ENCODE measurements at regions of chr3 and their contacts with region 1.

Region 1: DNA sequence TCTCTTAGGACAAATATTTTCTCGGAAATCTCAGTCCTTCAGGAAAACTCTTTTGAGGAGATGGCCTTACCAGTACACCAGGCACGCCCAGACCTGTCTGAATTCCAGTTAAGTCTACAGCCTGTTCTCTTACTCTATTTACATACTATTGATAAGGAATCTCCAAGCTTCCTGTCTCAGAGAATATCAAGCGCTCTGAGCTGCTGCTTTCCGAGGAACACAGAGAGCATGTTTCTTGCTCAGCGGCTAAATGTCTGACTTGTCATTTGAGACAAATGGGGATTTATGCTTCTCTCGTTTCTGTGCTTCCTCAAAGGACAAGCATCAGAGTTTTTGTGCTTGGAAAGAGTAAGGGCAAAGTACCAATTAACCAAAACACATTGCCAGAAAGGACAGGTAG is 112.4 kb upstream of the CCDC54 start:
- DNase-seq: no peak
- ATAC-seq: peak in 1 of 4 donors; percentile 18
- H3K4me3 ChIP-seq: peak overlapping the region in 1 of 12 donors; percentile 8
- H3K27ac ChIP-seq: peak overlapping the region in 5 of 12 donors; percentile 6 to 63 (median 17)
- H3K4me1 ChIP-seq: peaks cover 0 to 22% (median 1%) of the 10 kb centered on the region in 12 donors
- H3K27me3 ChIP-seq: no peaks in the 10 kb centered on the region
- CTCF ChIP-seq: no peak
- POLR2A ChIP-seq: no peak

Region 2: GRCh38 chr3:106333911-106334618 is 930.8 kb before region 1 on chr3:
- intact Hi-C with region 1: no loop called
- DNase-seq: no peak
- ATAC-seq: no peak
- H3K4me3 ChIP-seq: no peak overlapping the region
- H3K27ac ChIP-seq: no peak overlapping the region
- H3K4me1 ChIP-seq: peaks cover 0 to 3% (median 0%) of the 10 kb centered on the region in 12 donors
- H3K27me3 ChIP-seq: no peaks in the 10 kb centered on the region
- CTCF ChIP-seq: no peak
- POLR2A ChIP-seq: no peak

Region 3: DNA sequence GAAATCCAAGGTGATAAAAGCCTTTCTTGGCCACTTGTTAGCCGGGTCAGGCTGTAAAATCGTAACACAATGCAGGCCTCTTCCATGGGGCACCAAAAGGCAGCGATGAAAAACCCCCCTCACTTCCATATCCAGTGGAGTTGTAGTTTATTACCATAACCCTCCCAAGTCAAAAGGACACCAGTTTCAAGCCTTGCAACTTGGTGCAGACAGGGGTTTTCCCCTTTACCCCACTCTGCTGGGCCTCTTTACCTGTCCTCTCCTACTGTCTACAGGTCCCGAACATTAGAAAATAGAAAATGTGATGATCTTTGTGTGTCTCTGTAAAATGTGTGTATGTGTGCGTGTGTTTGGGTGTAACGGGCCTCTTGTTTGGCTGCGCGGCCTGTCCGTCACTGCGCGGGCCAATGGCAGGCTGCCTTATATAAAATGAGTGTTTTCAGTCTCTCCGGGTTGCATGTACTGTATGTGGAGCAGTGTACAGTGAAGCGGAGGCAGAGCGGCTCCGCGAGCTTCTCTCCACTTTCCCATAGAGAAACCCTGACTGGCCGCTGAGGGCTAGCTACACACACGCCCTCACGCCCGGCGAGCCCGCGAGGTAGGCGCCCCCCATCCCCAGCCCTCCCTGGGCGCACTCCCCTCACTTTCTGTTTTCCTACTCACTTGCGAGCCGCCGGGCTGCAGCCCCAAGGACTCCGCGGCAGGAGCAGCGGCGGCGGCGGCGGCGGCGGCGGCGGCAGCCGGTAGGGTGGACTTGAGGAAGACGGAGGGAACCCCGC is 257.8 kb after region 1 on chr3 and contains the start of gene BBX:
- intact Hi-C with region 1: loop called in 4 of 10 experiments (anchors 10 kb)
- DNase-seq: peak; percentile 91 to 95 (median 92)
- ATAC-seq: peak; percentile 97 to 99 (median 98)
- H3K4me3 ChIP-seq: peak within 1 kb of the TSS; percentile 75 to 97 (median 88)
- H3K27ac ChIP-seq: peak within 1 kb of the TSS; percentile 77 to 96 (median 92)
- H3K4me1 ChIP-seq: peaks cover 0 to 20% (median 10%) of the 10 kb centered on the region in 12 donors
- H3K27me3 ChIP-seq: no peaks in the 10 kb centered on the region
- CTCF ChIP-seq: peak in 3 of 12 donors; percentile 8 to 11 (median 8)
- POLR2A ChIP-seq: peak; percentile 31 to 89
- total RNA-seq, gene BBX: 34.0 to 60.5 (median 48.0) TPM